ENCODE measurements at regions of chr6 and their contacts with region 1.

Region 1: DNA sequence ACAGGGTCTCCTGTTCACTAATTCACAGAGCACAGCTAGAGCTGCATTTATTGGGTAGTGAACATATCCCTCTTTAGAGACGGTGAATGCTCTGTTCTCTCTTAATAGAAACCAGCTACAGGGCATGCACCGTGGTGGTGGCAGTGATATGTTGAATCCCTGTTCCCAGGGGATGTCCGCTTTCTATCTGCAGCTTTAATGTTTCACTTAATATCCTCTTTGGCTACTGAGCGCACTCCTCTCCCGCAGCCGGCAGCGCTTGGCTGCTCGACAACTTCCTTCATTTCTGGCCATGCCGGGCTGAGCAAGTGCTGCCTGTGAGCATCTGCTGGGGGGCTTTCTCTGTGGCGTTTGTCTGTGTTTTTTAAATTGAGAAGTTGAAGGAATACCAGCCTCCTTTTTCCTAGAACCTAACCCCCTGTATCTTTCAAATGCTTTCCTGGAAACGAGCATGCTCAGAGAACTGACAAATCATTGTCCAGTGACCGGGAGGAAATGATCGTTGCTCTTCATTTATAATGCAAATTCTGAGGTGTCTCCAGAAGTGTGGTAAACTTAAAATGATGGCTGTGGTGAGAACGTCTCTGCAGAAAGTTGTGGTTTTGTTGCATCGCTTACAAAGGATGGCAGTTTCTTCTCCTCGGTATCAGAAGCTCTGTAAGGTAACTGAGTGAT is 297.9 kb downstream of the UTRN start:
- DNase-seq: peak; percentile 81
- ATAC-seq: peak; percentile 86
- H3K4me3 Mint-ChIP-seq: peak overlapping the region; percentile 81
- H3K27ac Mint-ChIP-seq: peak overlapping the region; percentile 96
- H3K4me1 Mint-ChIP-seq: peaks cover 68% of the 10 kb centered on the region
- H3K27me3 Mint-ChIP-seq: no peaks in the 10 kb centered on the region

Region 2: DNA sequence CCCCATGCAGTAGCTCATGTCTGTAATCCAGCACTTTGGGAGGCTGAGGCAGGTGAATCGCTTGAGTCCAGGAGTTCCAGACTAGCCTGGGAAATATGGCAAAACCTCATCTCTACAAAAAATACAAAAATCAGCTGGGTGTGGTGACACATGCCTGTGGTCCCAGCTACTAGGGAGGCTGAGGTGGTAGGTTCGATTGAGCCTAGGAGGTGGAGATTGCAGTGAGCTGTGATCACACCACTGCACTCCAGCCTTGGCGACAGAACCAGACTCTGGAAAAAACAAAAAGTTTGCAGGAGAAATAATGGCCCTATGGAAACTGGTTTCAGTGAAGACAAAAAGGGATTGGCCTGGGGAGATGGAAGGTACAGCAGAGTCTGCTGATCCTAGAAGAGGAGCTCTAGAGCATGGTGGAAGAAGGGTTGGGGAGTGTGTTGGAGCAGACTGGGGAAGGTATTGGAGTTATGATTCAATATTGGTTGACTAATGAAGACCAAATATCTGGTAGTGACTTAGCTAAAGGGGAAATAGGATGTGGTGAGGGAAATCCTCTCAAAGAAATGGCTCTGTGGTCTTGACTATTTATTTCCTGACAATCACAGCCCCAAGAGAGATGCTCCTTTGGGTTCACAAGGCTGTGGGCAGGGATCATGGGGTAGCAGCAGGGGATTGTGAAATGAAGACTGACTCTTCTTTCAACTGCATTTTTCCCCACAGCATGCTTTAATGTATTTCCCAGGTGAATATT is 16.0 kb before region 1 on chr6:
- CTCF ChIA-PET with region 1: interaction called, 31 read pairs
- POLR2A ChIA-PET with region 1: interaction called, 7 read pairs
- DNase-seq: no peak
- ATAC-seq: peak; percentile 80
- H3K4me3 Mint-ChIP-seq: no peak overlapping the region
- H3K27ac Mint-ChIP-seq: no peak overlapping the region
- H3K4me1 Mint-ChIP-seq: peaks cover 13% of the 10 kb centered on the region
- H3K27me3 Mint-ChIP-seq: no peaks in the 10 kb centered on the region

Region 3: GRCh38 chr6:144597511-144597910 is 14.4 kb after region 1 on chr6:
- CTCF ChIA-PET with region 1: interaction called, 19 read pairs
- POLR2A ChIA-PET with region 1: no interaction called
- DNase-seq: no peak
- ATAC-seq: no peak
- H3K4me3 Mint-ChIP-seq: no peak overlapping the region
- H3K27ac Mint-ChIP-seq: no peak overlapping the region
- H3K4me1 Mint-ChIP-seq: peaks cover 22% of the 10 kb centered on the region
- H3K27me3 Mint-ChIP-seq: no peaks in the 10 kb centered on the region

Region 4: GRCh38 chr6:144675231-144675861 is 92.3 kb after region 1 on chr6:
- CTCF ChIA-PET with region 1: no interaction called
- POLR2A ChIA-PET with region 1: no interaction called
- DNase-seq: peak; percentile 44
- ATAC-seq: peak; percentile 53
- H3K4me3 Mint-ChIP-seq: no peak overlapping the region
- H3K27ac Mint-ChIP-seq: no peak overlapping the region
- H3K4me1 Mint-ChIP-seq: peaks cover 43% of the 10 kb centered on the region
- H3K27me3 Mint-ChIP-seq: no peaks in the 10 kb centered on the region

Region 5: GRCh38 chr6:144931172-144932035 is 348.3 kb after region 1 on chr6:
- CTCF ChIA-PET with region 1: interaction called, 12 read pairs
- POLR2A ChIA-PET with region 1: no interaction called
- DNase-seq: peak; percentile 61
- ATAC-seq: peak; percentile 68
- H3K4me3 Mint-ChIP-seq: no peak overlapping the region
- H3K27ac Mint-ChIP-seq: no peak overlapping the region
- H3K4me1 Mint-ChIP-seq: no peaks in the 10 kb centered on the region
- H3K27me3 Mint-ChIP-seq: peaks cover 7% of the 10 kb centered on the region